ENCODE measurements at regions of chr6 and their contacts with region 1.

Region 1: DNA sequence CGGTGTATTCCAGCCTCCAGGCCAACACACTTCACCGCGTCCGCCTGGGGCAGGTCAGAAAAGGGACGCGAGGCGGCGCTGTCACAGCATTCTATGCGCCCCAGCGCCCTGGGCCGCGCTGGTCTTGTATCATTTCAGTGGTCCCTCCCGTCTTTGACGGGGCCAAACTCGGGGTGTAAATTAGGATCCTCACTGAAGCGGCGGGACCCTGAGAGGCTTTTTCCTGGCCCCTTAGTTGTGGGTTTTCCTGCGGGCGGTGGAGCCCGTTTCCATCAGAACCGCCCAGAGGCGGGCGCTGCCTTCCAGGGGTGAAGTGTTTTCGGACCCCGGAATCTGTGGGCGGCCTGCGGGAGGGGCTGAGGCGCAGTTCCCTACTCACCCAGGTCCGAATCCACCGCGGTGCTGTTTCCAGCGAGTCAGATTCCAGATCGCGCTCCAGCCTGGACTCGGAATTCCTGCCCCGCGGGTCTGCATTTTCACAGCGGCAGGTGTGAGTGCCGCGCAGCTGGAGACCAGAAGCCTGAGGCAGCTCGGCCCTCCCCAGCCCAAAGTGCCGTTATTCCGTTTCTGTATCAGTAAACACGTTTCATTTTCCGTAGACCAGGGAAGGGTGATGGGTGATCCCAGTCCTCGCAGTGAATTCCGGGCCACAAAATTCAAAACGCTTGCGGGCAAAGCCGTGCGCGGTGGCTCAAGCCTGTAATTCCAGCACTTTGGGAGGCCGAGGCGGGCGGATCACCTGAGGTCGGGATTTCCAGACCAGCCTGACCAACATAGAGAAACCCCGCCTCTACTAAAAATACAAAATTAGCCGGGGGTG is 3.9 kb upstream of the MICB start:
- DNase-seq: peak; percentile 95
- H3K4me3 ChIP-seq: peak overlapping the region; percentile 44 to 87 (median 62)
- H3K27ac ChIP-seq: peak overlapping the region; percentile 84 to 95 (median 93)
- H3K4me1 ChIP-seq: peaks cover 31 to 67% (median 51%) of the 10 kb centered on the region in 6 donors
- H3K27me3 ChIP-seq: no peaks in the 10 kb centered on the region
- CTCF ChIP-seq: peak; percentile 53 to 93 (median 88)
- POLR2A ChIP-seq: no peak

Region 2: DNA sequence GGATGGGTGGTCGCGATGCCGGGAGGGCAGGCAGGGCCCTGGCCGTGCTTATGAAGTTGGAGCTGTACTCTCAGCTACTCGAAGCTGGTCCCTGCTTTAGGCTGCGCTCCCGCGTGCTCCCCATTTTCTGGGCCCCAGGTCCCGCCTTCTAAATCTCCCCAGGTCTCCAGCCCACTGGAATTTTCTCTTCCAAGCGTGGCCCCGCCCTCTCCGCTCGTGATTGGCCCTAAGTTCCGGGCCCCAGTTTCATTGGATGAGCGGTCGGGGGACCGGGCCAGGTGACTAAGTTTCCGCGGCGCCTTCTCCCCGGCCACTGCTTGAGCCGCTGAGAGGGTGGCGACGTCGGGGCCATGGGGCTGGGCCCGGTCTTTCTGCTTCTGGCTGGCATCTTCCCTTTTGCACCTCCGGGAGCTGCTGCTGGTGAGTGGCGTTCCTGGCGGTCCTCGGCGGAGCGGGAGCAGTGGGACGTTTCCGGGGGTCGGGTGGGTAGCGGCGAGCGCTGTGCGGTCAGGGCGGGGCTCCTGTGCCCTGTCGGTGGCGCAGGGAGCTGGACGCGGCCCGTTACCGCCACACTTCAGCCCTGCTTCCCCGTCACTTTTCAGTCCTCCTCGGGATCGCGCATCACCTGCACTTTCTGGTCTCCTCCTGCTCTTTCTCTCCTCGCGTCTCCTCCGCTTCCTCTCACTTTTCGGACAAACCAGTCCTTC is 90.6 kb before region 1 on chr6 and contains the start of gene MICA:
- intact Hi-C with region 1: loop called (anchors 10 kb)
- DNase-seq: peak; percentile 94
- H3K4me3 ChIP-seq: peak within 1 kb of the TSS; percentile 63 to 89 (median 67)
- H3K27ac ChIP-seq: peak within 1 kb of the TSS; percentile 6 to 99 (median 98)
- H3K4me1 ChIP-seq: peaks cover 17 to 85% (median 64%) of the 10 kb centered on the region in 6 donors
- H3K27me3 ChIP-seq: no peaks in the 10 kb centered on the region
- CTCF ChIP-seq: peak in 4 of 11 experiments; percentile 7 to 30 (median 18)
- POLR2A ChIP-seq: no peak
- total RNA-seq, gene MICA: 14.6 to 19.7 (median 15.2) TPM

Region 3: DNA sequence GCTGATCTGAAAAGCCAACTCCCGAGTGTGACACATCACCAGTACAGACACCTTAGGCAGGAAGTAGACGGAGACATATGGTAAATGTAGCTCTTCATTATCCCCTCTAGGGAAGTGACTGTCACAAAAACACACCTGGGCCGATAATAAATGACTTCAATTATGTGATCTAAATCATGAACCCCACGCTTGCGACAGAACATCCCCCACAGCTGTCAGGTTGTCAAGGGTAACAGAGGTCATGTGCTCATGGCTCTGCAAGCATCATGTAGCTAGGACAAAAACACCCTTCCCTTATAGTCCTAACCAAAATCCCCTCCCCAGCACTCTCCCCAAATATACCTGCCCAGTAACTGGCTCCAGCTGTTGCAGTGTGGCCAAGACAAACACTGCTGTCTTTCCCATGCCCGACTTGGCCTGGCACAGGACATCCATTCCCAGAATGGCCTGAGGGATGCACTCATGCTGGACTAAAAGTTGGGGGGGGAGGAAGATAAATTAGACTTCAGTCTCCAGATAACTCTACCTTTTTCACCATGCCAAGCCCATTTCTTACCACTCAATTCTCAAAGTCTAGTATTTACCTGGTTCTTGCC is 44.8 kb after region 1 on chr6:
- intact Hi-C with region 1: loop called (anchors 5 kb)
- DNase-seq: no peak
- H3K4me3 ChIP-seq: peak overlapping the region in 2 of 8 donors; percentile 74 to 88
- H3K27ac ChIP-seq: peak overlapping the region in 1 of 8 donors; percentile 10
- H3K4me1 ChIP-seq: peaks cover 30 to 86% (median 50%) of the 10 kb centered on the region in 6 donors
- H3K27me3 ChIP-seq: no peaks in the 10 kb centered on the region
- CTCF ChIP-seq: no peak
- POLR2A ChIP-seq: no peak

Measured in spleen (tissue), 13 donors.